ENCODE measurements at regions of chr1 and their contacts with region 1.

Region 1: DNA sequence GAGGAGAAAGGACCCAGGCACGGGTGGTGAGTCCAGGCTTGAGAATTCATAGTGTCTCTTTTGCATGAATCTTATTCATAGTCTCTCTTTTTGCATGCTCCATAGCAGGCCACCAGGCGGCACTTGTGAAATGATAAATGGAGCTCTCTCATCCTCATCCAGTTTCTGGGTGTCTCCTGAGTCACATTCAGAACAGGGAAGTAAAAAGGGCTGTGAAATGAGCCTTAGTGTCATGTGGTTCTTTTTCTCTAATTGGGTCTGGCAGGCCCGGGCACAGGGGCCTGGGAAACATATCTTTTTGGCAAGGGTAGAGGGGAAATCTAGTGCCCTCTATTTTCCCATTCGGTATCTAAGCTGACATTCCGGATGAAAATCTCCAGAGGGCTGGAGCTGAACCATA is 19.1 kb upstream of the NCF2 start:
- DNase-seq: peak; percentile 87
- H3K4me3 Mint-ChIP-seq: peak overlapping the region; percentile 38
- H3K27ac Mint-ChIP-seq: peak overlapping the region; percentile 99
- H3K4me1 Mint-ChIP-seq: peaks cover 31% of the 10 kb centered on the region
- H3K27me3 Mint-ChIP-seq: no peaks in the 10 kb centered on the region
- CTCF ChIP-seq: peak; percentile 69

Region 2: GRCh38 chr1:183580281-183580682 is 29.0 kb before region 1 on chr1:
- CTCF ChIA-PET with region 1: interaction called, 10 read pairs
- POLR2A ChIA-PET with region 1: no interaction called
- intact Hi-C with region 1: no loop called
- DNase-seq: peak; percentile 50
- H3K4me3 Mint-ChIP-seq: no peak overlapping the region
- H3K27ac Mint-ChIP-seq: no peak overlapping the region
- H3K4me1 Mint-ChIP-seq: peaks cover 9% of the 10 kb centered on the region
- H3K27me3 Mint-ChIP-seq: no peaks in the 10 kb centered on the region
- CTCF ChIP-seq: no peak

Region 3: GRCh38 chr1:183635606-183636333 is 26.5 kb after region 1 on chr1 and contains the start of gene ARPC5:
- CTCF ChIA-PET with region 1: interaction called, 23 read pairs
- POLR2A ChIA-PET with region 1: interaction called, 12 read pairs
- intact Hi-C with region 1: loop called (anchors 1 kb)
- DNase-seq: peak; percentile 99
- H3K4me3 Mint-ChIP-seq: peak within 1 kb of the TSS; percentile 100
- H3K27ac Mint-ChIP-seq: peak within 1 kb of the TSS; percentile 97
- H3K4me1 Mint-ChIP-seq: peaks cover 15% of the 10 kb centered on the region
- H3K27me3 Mint-ChIP-seq: no peaks in the 10 kb centered on the region
- CTCF ChIP-seq: no peak
- total RNA-seq, gene ARPC5: 195 and 240 TPM in 2 replicates

Region 4: GRCh38 chr1:183901748-183902330 is 292.5 kb after region 1 on chr1:
- CTCF ChIA-PET with region 1: no interaction called
- POLR2A ChIA-PET with region 1: no interaction called
- intact Hi-C with region 1: no loop called
- DNase-seq: no peak
- H3K4me3 Mint-ChIP-seq: no peak overlapping the region
- H3K27ac Mint-ChIP-seq: no peak overlapping the region
- H3K4me1 Mint-ChIP-seq: peaks cover under 1% of the 10 kb centered on the region
- H3K27me3 Mint-ChIP-seq: no peaks in the 10 kb centered on the region
- CTCF ChIP-seq: no peak

Measured in MCF 10A (cell line).